ENCODE measurements at regions of chr10 and their contacts with region 1.

Region 1: DNA sequence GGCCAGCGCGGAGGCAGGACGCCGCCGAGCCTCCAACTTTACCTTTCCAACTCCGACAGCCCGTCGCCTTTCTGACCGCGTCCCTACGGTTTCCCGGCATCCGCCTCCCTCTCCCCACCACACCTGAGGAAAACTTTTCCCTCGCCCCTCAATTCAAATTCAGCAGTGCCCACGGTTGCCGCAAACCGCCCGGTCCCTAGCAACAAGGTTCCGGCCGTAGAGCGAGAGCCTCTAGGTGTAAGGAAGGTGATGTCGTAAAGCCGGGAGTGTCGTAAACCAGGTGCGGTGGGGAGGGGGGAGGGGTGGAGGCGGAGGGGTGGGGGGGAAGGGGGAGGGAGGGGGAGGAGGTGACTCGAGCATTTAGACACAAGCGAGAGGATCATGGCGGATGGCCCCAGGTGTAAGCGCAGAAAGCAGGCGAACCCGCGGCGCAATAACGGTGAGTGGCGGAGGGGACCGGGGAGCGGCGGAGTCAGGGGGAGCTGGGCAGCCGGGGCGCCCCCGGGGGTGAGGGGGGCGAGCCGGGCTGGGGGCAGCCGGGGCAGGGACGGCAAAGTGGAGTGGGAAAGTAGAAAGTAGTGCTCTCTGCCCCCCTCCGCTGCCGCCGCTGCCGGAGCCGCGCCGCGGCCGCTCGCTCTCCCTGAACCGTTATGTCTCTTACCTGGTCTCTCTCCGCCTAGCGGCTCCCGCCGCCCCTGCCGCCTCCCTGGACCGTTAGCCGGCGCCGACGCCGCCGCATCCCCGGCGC is at the start of gene ZEB1:
- DNase-seq: peak; percentile 80
- ATAC-seq: peak; percentile 53
- H3K4me3 Mint-ChIP-seq: peak within 1 kb of the TSS; percentile 96
- H3K27ac Mint-ChIP-seq: peak within 1 kb of the TSS; percentile 98
- H3K4me1 Mint-ChIP-seq: peaks cover 34% of the 10 kb centered on the region
- H3K27me3 Mint-ChIP-seq: no peaks in the 10 kb centered on the region
- CTCF ChIP-seq: no peak
- total RNA-seq, gene ZEB1: 38.4 and 43.0 TPM in 2 replicates

Region 2: GRCh38 chr10:29725133-29725720 is 1593.8 kb before region 1 on chr10:
- CTCF ChIA-PET with region 1: no interaction called
- POLR2A ChIA-PET with region 1: no interaction called
- intact Hi-C with region 1: no loop called
- DNase-seq: no peak
- ATAC-seq: no peak
- H3K4me3 Mint-ChIP-seq: no peak overlapping the region
- H3K27ac Mint-ChIP-seq: no peak overlapping the region
- H3K4me1 Mint-ChIP-seq: peaks cover 4% of the 10 kb centered on the region
- H3K27me3 Mint-ChIP-seq: no peaks in the 10 kb centered on the region
- CTCF ChIP-seq: no peak

Region 3: DNA sequence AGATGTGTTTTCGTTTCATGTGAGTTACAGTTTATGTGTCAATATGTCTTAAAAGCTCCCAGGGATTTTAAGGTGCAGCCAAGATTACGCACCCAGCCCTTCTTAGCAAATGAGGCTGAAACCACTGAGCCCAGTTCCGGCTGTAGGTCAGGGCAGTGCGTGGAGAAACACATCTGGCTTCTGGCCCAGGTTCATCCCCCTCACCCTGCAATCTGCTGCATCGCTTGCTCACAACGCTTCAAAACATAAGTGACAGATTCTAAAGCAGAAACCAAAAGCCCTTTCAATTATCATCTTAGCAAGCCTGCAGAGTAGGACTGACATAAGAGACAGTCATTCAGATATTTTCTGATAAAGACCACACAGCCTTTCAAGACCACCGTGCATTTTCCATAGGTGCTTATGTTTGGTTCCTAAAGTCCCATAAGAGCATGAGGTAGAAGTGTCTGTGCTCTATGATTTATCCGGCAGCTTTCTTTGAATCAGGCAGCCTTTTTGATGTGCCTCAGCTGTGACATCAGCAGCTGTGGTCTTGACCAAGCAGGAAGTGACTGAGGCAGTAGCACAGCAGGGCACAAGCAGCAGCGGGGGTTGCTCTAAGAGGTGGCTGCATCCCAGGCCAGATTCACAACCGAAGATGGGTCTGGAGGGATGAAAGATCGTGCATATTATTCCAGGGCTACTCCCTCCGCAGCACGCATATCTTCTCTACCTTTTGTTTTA is 617.4 kb before region 1 on chr10:
- CTCF ChIA-PET with region 1: no interaction called
- POLR2A ChIA-PET with region 1: interaction called, 5 read pairs
- intact Hi-C with region 1: loop called (anchors 1 kb)
- DNase-seq: no peak
- ATAC-seq: peak; percentile 61
- H3K4me3 Mint-ChIP-seq: peak overlapping the region; percentile 74
- H3K27ac Mint-ChIP-seq: peak overlapping the region; percentile 86
- H3K4me1 Mint-ChIP-seq: peaks cover 64% of the 10 kb centered on the region
- H3K27me3 Mint-ChIP-seq: no peaks in the 10 kb centered on the region
- CTCF ChIP-seq: no peak

Region 4: GRCh38 chr10:31083765-31084184 is 235.3 kb before region 1 on chr10:
- CTCF ChIA-PET with region 1: no interaction called
- POLR2A ChIA-PET with region 1: no interaction called
- intact Hi-C with region 1: loop called (anchors 2 kb)
- DNase-seq: no peak
- ATAC-seq: peak; percentile 64
- H3K4me3 Mint-ChIP-seq: no peak overlapping the region
- H3K27ac Mint-ChIP-seq: no peak overlapping the region
- H3K4me1 Mint-ChIP-seq: no peaks in the 10 kb centered on the region
- H3K27me3 Mint-ChIP-seq: peaks cover 5% of the 10 kb centered on the region
- CTCF ChIP-seq: no peak

Region 5: GRCh38 chr10:31340343-31340742 is 21.3 kb after region 1 on chr10:
- CTCF ChIA-PET with region 1: no interaction called
- POLR2A ChIA-PET with region 1: no interaction called
- intact Hi-C with region 1: loop called (anchors 2 kb)
- DNase-seq: no peak
- ATAC-seq: no peak
- H3K4me3 Mint-ChIP-seq: no peak overlapping the region
- H3K27ac Mint-ChIP-seq: no peak overlapping the region
- H3K4me1 Mint-ChIP-seq: peaks cover 20% of the 10 kb centered on the region
- H3K27me3 Mint-ChIP-seq: no peaks in the 10 kb centered on the region
- CTCF ChIP-seq: no peak

Region 6: DNA sequence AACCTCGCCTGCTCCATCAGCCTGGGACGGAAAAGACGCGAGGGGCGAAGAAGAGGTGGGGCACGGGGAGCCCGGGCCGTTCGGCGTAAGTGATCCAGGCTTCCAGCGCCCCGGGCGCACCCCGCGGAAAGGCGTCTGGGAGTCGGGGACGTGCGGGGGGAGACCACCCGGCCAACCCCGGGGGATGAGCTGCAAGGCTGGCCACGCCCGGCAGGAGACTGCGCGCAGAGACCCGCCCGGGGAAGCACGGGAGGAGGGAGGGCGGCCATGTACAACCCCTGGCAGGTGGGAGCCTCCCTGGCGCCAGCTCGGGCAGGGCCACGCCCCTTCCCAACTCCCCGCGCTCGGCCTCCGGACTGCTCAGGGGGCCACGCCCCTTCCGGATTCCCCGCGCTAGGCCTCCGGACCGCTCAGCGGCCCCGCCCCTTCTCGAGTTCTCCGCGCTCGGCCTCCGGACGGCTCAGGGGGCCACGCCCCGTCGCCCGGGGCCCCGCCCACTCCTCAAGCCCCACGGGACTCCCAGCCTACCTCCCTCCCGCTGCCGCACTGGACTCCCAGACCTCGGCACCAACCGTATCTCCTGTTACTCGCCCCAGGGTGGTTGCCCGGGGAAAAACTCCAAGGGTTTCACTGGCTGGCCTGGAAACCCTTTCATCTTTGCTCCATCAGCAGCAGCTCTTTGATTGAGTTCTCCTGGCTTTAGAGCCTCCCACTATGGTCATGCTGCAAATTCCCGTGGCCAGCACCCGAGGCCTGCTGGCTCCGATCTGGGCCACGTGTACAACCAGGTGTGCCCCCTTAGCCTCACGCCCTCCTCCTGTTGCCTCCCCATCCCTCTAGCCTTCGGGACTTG is 284.4 kb after region 1 on chr10:
- CTCF ChIA-PET with region 1: no interaction called
- POLR2A ChIA-PET with region 1: no interaction called
- intact Hi-C with region 1: loop called (anchors 1 kb)
- DNase-seq: peak; percentile 64
- ATAC-seq: peak; percentile 97
- H3K4me3 Mint-ChIP-seq: peak overlapping the region; percentile 83
- H3K27ac Mint-ChIP-seq: no peak overlapping the region
- H3K4me1 Mint-ChIP-seq: peaks cover 12% of the 10 kb centered on the region
- H3K27me3 Mint-ChIP-seq: peaks cover 6% of the 10 kb centered on the region
- CTCF ChIP-seq: no peak

Region 7: DNA sequence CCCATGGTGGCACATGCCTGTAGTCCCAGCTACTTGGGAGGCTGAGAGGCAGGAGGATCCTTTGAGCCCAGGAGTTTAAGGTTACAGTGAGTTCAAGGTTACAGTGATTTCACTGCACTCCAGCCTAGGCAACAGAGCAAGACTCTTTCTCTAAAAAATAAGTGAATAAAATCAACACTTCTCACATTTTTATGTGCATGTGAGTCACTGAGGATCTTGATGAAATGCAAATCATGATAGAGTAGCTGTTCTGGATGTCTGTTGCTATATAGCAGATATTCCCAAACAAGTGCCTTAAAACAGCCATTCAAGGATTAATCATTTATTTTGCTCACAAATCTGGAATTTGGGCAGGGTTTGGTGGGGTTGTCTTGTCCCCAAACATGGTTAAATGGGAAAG is 671.9 kb after region 1 on chr10:
- CTCF ChIA-PET with region 1: no interaction called
- POLR2A ChIA-PET with region 1: no interaction called
- intact Hi-C with region 1: no loop called
- DNase-seq: no peak
- ATAC-seq: no peak
- H3K4me3 Mint-ChIP-seq: no peak overlapping the region
- H3K27ac Mint-ChIP-seq: no peak overlapping the region
- H3K4me1 Mint-ChIP-seq: no peaks in the 10 kb centered on the region
- H3K27me3 Mint-ChIP-seq: peaks cover 4% of the 10 kb centered on the region
- CTCF ChIP-seq: no peak

Region 8: GRCh38 chr10:32346134-32346550 is 1027.1 kb after region 1 on chr10:
- CTCF ChIA-PET with region 1: no interaction called
- POLR2A ChIA-PET with region 1: interaction called, 3 read pairs
- intact Hi-C with region 1: loop called (anchors 1 kb)
- DNase-seq: peak; percentile 93
- ATAC-seq: peak; percentile 84
- H3K4me3 Mint-ChIP-seq: peak overlapping the region; percentile 96
- H3K27ac Mint-ChIP-seq: peak overlapping the region; percentile 100
- H3K4me1 Mint-ChIP-seq: peaks cover 72% of the 10 kb centered on the region
- H3K27me3 Mint-ChIP-seq: no peaks in the 10 kb centered on the region
- CTCF ChIP-seq: peak; percentile 67

Measured in activated B cell treated with CpG ODN at 0.5 μM for 24 hours (primary cell).